ENCODE measurements at regions of chr7 and their contacts with region 1.

Region 1: DNA sequence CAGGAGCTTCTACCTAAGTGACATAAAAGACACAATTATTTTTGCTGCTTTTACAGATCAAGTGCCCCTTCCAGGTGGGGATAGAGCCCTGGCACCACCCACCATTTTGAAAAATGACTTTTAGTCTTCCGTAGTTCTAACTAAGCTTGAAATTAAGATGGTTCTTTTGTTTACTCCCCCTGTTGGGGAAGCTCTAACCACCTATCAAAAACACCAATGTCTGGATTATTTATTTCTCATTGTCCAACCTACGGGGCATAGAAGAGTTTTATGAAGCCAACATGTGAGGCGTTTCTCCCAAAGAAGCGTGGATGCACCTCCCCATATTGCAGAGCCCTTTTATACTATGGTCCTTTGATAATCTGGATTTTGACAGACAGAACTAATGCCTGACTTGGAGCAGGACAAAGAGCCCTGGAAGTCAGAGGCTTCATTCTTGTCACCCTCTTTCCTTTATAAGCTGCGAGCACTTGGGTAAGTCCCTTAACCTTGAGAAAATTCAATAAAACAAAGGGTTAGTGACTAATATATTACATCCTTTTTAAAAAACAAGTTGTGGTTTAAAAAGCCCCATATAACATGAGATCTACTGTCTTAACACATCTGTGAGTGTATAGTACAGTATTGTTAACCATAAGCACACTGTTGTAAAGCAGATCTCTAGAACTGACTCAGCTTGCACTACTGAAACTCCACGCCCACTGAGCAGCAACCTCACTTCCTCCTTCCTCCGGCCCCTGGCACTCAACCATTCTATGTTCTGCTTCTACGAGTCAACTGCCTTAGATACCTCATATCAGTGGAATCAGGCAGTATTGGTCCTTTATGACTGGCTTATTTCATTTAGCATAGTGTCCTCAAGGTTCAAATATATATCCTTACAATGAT is 67.5 kb downstream of the ATXN7L1 start:
- DNase-seq: peak; percentile 85
- H3K4me3 Mint-ChIP-seq: peak overlapping the region; percentile 26
- H3K27ac Mint-ChIP-seq: peak overlapping the region; percentile 81
- H3K4me1 Mint-ChIP-seq: peaks cover 76% of the 10 kb centered on the region
- H3K27me3 Mint-ChIP-seq: no peaks in the 10 kb centered on the region

Region 2: DNA sequence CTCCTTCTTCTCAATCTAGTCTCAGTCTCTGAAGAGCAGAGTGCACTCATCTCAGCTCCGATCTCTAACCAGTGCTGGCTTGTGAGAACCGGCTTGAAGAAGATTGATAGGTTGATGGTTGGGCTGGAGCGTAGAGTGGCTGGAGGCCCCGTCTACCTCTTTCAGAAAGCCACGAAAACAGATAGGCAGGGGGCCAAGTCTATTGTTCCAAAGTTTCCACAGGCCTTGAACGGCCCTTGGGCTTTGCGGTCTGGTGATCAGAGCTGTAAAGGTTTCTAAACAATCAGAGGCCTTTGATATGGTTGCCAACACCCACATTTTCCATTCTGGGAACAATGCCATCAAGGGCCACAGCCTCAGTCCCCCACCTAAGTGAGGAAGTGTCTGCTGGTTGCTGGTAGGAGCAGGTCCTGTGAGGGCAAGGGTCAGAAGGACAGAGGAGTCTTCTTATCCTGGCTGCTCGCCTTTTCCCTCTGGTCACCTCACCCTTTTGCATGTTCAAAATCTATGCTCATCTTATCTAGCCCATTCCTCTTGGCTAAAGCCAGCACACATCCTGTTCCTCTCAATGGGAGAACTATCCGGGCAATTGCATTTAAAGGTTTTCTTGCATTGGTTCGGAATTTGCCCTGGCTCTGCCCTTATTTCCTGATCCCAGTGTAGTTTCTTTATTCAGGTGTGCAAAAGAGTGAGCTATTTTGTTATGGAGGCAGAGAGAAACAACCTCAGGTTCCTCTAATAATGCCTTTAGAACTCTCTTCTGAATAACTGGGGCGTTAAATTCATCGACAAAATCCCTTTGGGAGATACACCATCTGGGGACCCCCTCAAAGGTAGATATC is 865.2 kb before region 1 on chr7:
- intact Hi-C with region 1: loop called (anchors 5 kb)
- DNase-seq: peak; percentile 78
- H3K4me3 Mint-ChIP-seq: peak overlapping the region; percentile 97
- H3K27ac Mint-ChIP-seq: peak overlapping the region; percentile 99
- H3K4me1 Mint-ChIP-seq: peaks cover 50% of the 10 kb centered on the region
- H3K27me3 Mint-ChIP-seq: no peaks in the 10 kb centered on the region

Region 3: DNA sequence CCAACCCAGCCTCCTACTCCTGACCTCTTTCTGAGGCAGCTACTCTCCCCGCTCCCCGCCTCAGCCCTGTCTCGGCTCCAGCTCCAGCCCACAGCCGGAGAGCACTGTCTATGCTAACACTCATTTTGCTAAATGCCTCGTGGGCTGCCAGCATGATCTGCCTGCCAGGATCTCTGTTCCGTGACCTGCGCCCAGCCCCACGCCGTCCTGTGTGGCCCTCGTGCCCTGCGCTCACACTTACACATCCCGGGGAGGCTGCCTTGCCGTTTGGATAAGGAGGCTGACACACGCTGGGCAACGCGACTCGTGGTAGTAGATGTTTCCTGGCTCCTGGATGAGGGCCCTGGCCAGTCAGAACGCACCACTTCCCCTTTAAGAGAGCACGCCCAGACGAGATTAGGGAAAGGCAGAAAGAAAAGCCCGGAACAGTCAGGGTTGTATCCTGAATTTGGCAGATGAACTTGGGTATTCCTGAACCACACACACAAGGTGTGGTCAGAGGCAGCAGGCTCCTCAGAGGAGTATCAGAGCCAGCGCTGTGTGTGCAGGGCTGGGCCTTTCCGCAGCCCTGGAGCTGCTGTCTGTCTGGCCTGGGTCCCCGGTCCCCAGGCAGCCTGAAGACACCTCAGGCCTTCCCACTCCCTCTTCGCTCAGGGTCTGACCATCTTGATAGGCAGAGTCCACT is 130.0 kb before region 1 on chr7:
- intact Hi-C with region 1: loop called (anchors 5 kb)
- DNase-seq: peak; percentile 19
- H3K4me3 Mint-ChIP-seq: peak overlapping the region; percentile 89
- H3K27ac Mint-ChIP-seq: peak overlapping the region; percentile 94
- H3K4me1 Mint-ChIP-seq: peaks cover 57% of the 10 kb centered on the region
- H3K27me3 Mint-ChIP-seq: no peaks in the 10 kb centered on the region

Region 4: DNA sequence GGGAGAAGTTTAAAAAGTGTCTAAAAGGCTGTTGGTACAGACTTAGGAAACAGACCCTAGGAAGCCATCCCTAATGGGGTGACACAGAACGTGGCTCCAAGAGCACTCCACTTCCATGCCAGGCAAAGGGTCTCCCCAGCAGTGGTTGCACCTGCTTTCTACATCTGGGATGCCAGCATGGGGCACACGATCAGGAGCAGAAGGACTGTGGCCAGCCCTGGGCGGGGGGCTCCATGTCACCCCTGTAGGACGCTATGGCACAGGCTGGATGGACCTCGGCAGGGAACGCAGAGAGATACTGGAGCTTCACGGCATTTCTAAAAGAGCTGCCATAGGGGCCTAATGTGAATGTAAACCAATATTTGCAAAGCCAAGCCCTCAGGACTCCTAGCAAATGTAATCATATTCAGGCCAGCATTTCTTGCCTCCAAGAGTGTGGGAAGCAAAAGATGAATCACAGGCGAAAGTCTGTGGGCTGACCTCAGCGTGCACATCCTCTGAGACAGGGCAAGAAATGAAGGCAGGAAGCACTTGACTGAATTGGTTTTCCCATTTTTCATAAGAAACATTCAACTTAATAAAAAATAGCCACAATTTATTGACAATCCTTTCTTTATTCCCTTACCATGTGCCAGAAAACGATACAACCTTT is 26.4 kb before region 1 on chr7:
- intact Hi-C with region 1: loop called (anchors 1 kb)
- DNase-seq: no peak
- H3K4me3 Mint-ChIP-seq: no peak overlapping the region
- H3K27ac Mint-ChIP-seq: no peak overlapping the region
- H3K4me1 Mint-ChIP-seq: peaks cover 19% of the 10 kb centered on the region
- H3K27me3 Mint-ChIP-seq: peaks cover 21% of the 10 kb centered on the region

Region 5: DNA sequence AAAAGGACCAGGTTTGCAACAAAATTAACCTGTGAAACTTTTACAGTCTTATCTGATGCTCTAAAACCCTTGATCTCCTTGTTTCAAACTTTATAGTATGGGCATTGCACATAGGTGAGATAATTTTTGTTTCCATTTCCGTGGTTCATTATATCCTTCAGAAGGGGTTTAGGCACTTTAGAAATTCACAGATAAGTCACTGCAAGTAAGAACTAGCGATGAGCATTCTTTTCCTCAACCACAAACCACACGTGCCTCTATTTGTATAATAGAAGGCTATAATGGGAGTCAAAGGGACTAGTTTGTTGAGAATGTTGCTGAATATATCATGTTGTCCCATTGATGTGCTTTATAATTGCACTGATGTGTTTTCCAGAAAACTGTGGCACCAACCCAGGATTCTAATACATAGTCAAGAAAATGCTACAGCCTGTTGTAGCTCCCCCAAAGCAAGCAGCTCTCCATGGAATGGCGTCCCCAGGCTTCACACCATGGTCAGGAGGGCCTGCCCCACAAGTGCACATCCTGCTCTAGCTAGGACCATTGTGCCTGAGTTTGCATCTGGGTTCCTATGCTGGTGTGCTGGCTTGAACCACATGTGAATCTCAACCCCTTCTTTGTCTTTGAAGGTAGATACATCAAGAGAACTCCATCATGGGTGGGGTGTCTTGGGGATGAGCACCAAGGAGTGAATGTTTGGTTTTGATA is 81.5 kb after region 1 on chr7:
- intact Hi-C with region 1: loop called (anchors 1 kb)
- DNase-seq: no peak
- H3K4me3 Mint-ChIP-seq: no peak overlapping the region
- H3K27ac Mint-ChIP-seq: no peak overlapping the region
- H3K4me1 Mint-ChIP-seq: peaks cover 13% of the 10 kb centered on the region
- H3K27me3 Mint-ChIP-seq: peaks cover 24% of the 10 kb centered on the region

Region 6: DNA sequence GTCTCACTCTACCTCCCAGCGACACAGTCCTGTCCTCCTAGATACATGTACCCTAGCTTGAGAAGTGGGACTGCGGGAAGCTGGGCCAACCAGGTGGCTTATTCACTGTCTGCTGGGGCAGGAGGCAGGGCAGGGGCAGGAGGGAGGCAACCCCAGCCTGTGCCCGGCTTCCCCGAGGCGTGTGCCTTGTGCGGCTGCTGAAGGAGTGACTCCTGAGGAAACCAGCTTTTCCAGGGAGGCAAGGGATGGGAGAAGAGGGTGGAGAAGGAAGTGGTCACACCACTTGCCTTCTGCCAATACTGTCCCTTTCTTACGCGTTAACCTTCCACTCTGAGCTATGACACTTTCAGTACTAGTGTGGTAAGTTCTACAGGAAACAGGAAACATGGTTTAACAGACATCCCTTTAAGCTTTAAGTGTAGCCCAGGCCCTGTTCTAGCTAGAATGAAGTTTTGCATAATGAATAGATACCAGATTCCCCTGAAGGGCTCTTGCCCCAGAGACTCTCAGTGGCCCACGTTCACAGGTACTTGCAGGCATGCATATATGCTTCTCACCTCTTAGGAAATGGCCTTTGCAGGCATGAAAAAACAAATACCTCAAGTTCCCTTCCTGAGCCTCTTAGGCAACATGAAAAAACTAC is 262.5 kb after region 1 on chr7:
- intact Hi-C with region 1: loop called (anchors 1 kb)
- DNase-seq: peak; percentile 41
- H3K4me3 Mint-ChIP-seq: peak overlapping the region; percentile 75
- H3K27ac Mint-ChIP-seq: peak overlapping the region; percentile 98
- H3K4me1 Mint-ChIP-seq: peaks cover 62% of the 10 kb centered on the region
- H3K27me3 Mint-ChIP-seq: no peaks in the 10 kb centered on the region

Region 7: DNA sequence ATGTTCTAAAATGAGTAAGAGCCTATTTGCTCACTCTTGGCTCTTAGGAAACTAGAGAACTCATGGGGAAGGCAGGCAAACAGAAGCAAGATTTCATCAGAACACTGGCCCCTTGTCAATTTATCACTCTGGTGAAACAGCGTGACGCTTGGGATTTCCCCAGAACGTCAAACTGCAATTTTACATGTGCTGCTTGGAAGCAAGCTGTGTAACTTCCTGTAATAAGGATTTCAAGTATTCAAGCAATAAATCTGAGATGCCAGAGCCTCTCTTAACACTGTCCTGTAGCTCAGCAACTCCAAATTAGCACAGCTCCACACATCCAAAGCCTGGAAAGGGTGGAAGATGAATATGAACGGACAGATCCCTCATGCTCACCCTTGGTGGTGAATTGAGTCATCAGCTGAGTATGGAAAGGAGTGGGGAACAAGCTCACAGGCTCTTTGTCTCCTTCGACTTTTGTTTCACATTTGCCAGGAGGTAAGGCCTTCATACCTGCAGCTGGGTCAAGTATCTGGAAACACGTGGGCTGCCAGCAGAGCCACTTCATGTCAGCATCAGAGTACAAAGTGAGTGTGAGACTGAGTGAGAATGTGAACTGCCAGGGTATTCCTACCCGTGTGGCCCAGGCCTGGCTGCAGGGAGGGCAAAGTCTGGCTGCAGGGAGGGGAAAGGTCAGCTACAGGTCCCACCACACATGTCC is 616.2 kb after region 1 on chr7:
- intact Hi-C with region 1: loop called (anchors 5 kb)
- DNase-seq: peak; percentile 44
- H3K4me3 Mint-ChIP-seq: peak overlapping the region; percentile 65
- H3K27ac Mint-ChIP-seq: peak overlapping the region; percentile 98
- H3K4me1 Mint-ChIP-seq: peaks cover 75% of the 10 kb centered on the region
- H3K27me3 Mint-ChIP-seq: no peaks in the 10 kb centered on the region

Measured in activated T-helper 2 cell treated with anti-CD3 and anti-CD28 coated beads, Interferon-gamma antibody, Interleukin-2, Interleukin-4, amounts not matched to agents 10 μg/mL and 5 μg/mL and 100 μg/mL, durations not matched to agents 14 hours and 24 hours and 36 hours (primary cell).